Left ventricle myocardium inferior (tissue), 1 donor: ENCODE measurements at regions of chr20 and their contacts with region 1.

Region 1: DNA sequence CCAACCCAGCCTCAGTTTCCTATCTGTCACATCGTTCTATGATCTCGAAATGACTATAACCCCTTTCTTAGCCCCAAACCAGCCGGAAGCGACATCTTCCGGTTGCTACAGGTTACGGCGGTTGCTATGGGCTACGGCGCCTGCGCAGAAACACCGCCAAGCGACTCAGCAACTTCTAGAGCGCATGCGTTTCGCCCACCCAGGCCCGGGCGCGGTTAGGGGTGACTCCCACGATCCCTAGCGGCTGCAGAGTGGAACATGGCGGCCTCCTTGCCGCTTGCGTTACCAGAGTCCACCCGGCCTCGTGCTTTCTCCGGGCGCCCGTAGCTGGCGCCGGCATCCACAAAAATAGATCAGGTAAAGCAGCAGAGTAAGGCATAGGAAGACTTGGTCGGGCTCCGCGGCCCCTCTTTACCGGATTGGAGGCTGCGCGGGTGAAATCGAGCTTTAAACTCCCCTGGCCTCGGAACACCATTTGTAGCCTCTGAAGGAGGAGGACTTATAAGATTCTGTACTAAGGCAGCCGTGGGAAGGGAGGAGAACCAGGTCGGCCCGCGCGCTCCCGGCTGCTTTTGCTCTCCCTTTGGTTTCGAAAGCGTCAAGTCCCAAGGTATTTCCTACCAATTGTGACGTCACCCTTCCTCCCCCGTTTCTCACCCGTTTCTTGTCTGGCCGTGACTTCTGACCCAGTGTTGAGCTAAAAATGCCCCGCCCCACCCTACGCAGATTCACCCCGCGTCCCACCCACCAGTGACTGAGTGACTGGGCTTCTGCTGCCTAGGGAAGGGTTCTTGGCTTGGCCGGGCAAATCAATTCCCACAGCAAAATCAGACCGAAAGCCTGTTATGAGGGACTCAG is 3.5 kb downstream of the SDCBP2 start:
- DNase-seq: peak; percentile 99
- H3K4me3 ChIP-seq: peak overlapping the region; percentile 87
- H3K27ac ChIP-seq: peak overlapping the region; percentile 100
- H3K4me1 ChIP-seq: peaks cover 95% of the 10 kb centered on the region
- H3K27me3 ChIP-seq: no peaks in the 10 kb centered on the region
- CTCF ChIP-seq: peak; percentile 49

Region 2: DNA sequence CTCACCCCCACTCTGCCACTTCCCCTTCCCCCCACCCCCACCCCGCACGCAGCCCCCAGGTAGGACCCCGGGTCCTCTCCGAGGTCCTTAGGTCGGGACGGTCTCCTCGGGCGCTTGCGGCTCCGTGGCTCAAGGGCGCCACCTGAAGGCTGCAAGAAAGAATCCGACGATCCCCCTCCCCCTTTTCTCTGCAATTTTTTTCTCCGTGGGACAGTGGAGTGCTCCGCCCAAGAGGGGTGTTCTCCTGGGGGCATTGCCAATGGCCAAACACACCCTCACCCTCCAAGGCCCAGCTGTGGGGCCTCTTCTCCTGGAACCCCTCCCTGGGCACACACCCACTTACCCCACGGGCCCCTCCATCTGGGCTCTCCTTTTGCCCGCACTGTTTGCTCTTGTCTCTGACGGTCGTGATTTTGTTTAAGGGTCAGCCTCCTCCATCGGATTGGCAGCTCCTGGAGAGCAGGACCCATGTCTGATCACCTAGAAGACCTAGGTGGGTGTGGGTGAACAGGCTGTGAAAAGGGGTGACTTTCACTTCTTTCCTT is 139.5 kb before region 1 on chr20:
- intact Hi-C with region 1: no loop called
- DNase-seq: peak; percentile 37
- H3K4me3 ChIP-seq: peak overlapping the region; percentile 73
- H3K27ac ChIP-seq: peak overlapping the region; percentile 60
- H3K4me1 ChIP-seq: peaks cover 43% of the 10 kb centered on the region
- H3K27me3 ChIP-seq: peaks cover 31% of the 10 kb centered on the region
- CTCF ChIP-seq: peak; percentile 61

Region 3: GRCh38 chr20:1392823-1393506 is 67.6 kb after region 1 on chr20 and contains the start of gene FKBP1A:
- intact Hi-C with region 1: loop called (anchors 5 kb)
- DNase-seq: peak; percentile 91
- H3K4me3 ChIP-seq: peak within 1 kb of the TSS; percentile 96
- H3K27ac ChIP-seq: peak within 1 kb of the TSS; percentile 93
- H3K4me1 ChIP-seq: peaks cover 68% of the 10 kb centered on the region
- H3K27me3 ChIP-seq: peaks cover 20% of the 10 kb centered on the region
- CTCF ChIP-seq: peak; percentile 51
- total RNA-seq, gene FKBP1A: 124 TPM